ENCODE measurements at regions of chr2 and their contacts with region 1.

Region 1: DNA sequence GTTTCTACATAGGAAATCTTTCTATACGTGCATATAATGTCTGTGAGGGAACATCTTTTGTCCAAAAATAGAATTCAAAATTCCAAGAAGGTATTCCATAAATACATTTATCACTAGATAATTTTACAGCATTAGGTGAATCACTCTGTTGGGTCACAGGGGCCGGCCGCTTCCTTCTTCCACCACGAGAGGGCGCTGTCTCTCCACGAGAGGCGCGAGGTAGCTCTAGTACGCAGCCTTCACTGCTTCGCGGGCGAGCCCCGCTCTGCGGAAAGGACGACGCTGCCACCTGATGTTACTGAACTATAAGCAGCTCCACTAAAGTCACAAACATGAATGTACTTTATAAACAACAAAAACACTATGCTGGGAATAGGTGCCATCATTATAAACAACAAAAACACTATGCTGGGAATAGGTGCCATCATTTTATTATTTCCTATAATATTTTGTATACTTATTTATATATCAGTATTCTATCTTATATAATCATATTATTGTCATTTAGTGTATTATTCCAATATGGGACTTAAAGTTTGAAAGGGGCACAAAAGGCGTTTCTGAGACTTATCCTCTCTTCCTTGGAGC is 69.4 kb upstream of the REV1 start:
- DNase-seq: peak; percentile 56
- ATAC-seq: peak; percentile 97
- H3K4me3 ChIP-seq: no peak overlapping the region
- H3K27ac ChIP-seq: no peak overlapping the region
- H3K4me1 ChIP-seq: no peaks in the 10 kb centered on the region
- H3K27me3 ChIP-seq: peaks cover 15% of the 10 kb centered on the region
- CTCF ChIP-seq: peak; percentile 95 to 98 (median 96)
- POLR2A ChIP-seq: no peak
- RAD21 ChIP-seq: peak; percentile 96

Region 2: GRCh38 chr2:99615247-99615771 is 56.1 kb after region 1 on chr2:
- CTCF ChIA-PET with region 1: interaction called, 17 read pairs
- POLR2A ChIA-PET with region 1: no interaction called
- RAD21 ChIA-PET with region 1: interaction called, 3 read pairs
- intact Hi-C with region 1: no loop called
- DNase-seq: peak; percentile 21
- ATAC-seq: peak; percentile 92
- H3K4me3 ChIP-seq: no peak overlapping the region
- H3K27ac ChIP-seq: no peak overlapping the region
- H3K4me1 ChIP-seq: no peaks in the 10 kb centered on the region
- H3K27me3 ChIP-seq: 0 out of 2 replicates have a peak, but pooled peaks cover 5% of the 10 kb centered on the region
- CTCF ChIP-seq: peak; percentile 9 to 47 (median 47); a peak in 4 of 6 replicates
- POLR2A ChIP-seq: no peak
- RAD21 ChIP-seq: no peak

Region 3: GRCh38 chr2:99818842-99819241 is 259.7 kb after region 1 on chr2:
- CTCF ChIA-PET with region 1: interaction called, 11 read pairs
- POLR2A ChIA-PET with region 1: no interaction called
- RAD21 ChIA-PET with region 1: interaction called in 1 of 2 experiments, 3 read pairs
- intact Hi-C with region 1: loop called (anchors 1 kb)
- DNase-seq: peak; percentile 12
- ATAC-seq: no peak
- H3K4me3 ChIP-seq: no peak overlapping the region
- H3K27ac ChIP-seq: no peak overlapping the region
- H3K4me1 ChIP-seq: no peaks in the 10 kb centered on the region
- H3K27me3 ChIP-seq: peaks cover 49% of the 10 kb centered on the region
- CTCF ChIP-seq: peak; percentile 19 to 37 (median 37); a peak in 3 of 6 replicates
- POLR2A ChIP-seq: no peak
- RAD21 ChIP-seq: peak; percentile 51

Region 4: GRCh38 chr2:100242891-100243619 is 683.9 kb after region 1 on chr2:
- CTCF ChIA-PET with region 1: interaction called, 8 read pairs
- POLR2A ChIA-PET with region 1: no interaction called
- RAD21 ChIA-PET with region 1: interaction called in 1 of 2 experiments, 4 read pairs
- intact Hi-C with region 1: loop called (anchors 1 kb)
- DNase-seq: peak; percentile 35
- ATAC-seq: peak; percentile 94
- H3K4me3 ChIP-seq: no peak overlapping the region
- H3K27ac ChIP-seq: no peak overlapping the region
- H3K4me1 ChIP-seq: no peaks in the 10 kb centered on the region
- H3K27me3 ChIP-seq: peaks cover 4% of the 10 kb centered on the region; the same call in 1 of the 2 replicates
- CTCF ChIP-seq: peak; percentile 74 to 78 (median 77)
- POLR2A ChIP-seq: no peak
- RAD21 ChIP-seq: peak; percentile 89

Region 5: GRCh38 chr2:100262555-100263320 is 703.6 kb after region 1 on chr2:
- CTCF ChIA-PET with region 1: interaction called, 30 read pairs
- POLR2A ChIA-PET with region 1: no interaction called
- RAD21 ChIA-PET with region 1: interaction called in 1 of 2 experiments, 3 read pairs
- intact Hi-C with region 1: loop called (anchors 5 kb)
- DNase-seq: peak; percentile 54
- ATAC-seq: peak; percentile 89
- H3K4me3 ChIP-seq: no peak overlapping the region
- H3K27ac ChIP-seq: no peak overlapping the region
- H3K4me1 ChIP-seq: 0 out of 4 replicates have a peak, but pooled peaks cover 0 to 6% of the 10 kb centered on the region in 2 experiments
- H3K27me3 ChIP-seq: no peaks in the 10 kb centered on the region
- CTCF ChIP-seq: peak; percentile 88 to 97 (median 94)
- POLR2A ChIP-seq: no peak
- RAD21 ChIP-seq: peak; percentile 98

Region 6: DNA sequence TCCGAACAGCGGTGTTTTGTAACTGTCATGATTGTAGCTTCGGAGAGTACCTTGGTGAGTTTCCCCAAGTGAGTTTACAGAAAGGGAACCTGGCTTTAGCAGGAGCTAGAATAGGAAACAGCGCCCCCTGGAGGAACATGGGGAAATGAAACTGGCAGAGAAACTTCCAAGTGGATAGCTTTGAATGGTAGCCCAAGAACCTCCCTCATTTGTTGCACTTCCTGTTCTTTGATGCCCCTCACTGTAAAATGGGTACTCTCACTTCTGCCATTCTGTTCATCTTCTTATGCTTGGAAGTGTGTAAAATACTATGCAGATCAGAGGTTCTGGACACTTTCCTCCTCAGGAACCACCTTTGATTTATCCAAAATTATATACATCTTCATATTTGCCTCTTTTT is 822.1 kb after region 1 on chr2:
- CTCF ChIA-PET with region 1: interaction called, 5 read pairs
- POLR2A ChIA-PET with region 1: no interaction called
- RAD21 ChIA-PET with region 1: no interaction called
- intact Hi-C with region 1: loop called (anchors 10 kb)
- DNase-seq: peak; percentile 71
- ATAC-seq: peak; percentile 89
- H3K4me3 ChIP-seq: no peak overlapping the region
- H3K27ac ChIP-seq: no peak overlapping the region
- H3K4me1 ChIP-seq: peaks cover 0 to 7% of the 10 kb centered on the region in 2 experiments; a peak in 2 of 4 replicates
- H3K27me3 ChIP-seq: no peaks in the 10 kb centered on the region
- CTCF ChIP-seq: peak; percentile 86 to 93 (median 87); a peak in 5 of 6 replicates
- POLR2A ChIP-seq: no peak
- RAD21 ChIP-seq: peak; percentile 95

Measured in HCT116 (cell line).